Activated T-helper 1 cell treated with anti-CD3 and anti-CD28 coated beads, Interleukin-12 subunit alpha, Interleukin-12 subunit beta, Interleukin-2, Interleukin-4 antibody, amounts not matched to agents 30 ng/mL and 10 ng/mL and 1 ng/mL, durations not matched to agents 14 hours and 24 hours and 36 hours (primary cell): ENCODE measurements at regions of chr22 and their contacts with region 1.

Region 1: DNA sequence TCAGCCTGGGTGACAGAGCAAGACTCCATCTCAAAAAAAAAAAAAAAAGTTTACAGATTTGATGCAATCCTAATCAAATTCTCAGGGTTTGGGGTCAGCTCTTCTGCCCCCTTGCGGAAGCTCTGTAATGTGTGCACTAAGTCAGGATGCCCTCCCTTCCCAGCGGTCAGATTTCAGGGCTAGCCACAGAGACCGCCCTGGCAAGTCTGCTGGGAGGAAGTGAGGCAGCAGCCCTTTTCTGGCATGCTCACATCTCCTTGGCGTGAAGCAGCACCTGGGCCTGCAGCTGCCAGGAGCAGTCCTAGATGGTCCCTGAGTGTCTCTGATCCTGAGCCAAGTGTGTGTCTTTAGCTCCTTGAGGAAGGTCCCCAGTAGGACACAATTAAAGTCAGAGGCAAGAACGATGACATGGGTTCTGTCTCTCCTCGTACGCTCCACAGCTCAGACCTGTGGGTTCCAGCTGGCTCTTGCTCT is 10.9 kb upstream of the APOBEC3C start:
- DNase-seq: peak; percentile 68
- H3K4me3 Mint-ChIP-seq: no peak overlapping the region
- H3K27ac Mint-ChIP-seq: no peak overlapping the region
- H3K4me1 Mint-ChIP-seq: peaks cover 8% of the 10 kb centered on the region
- H3K27me3 Mint-ChIP-seq: peaks cover 18% of the 10 kb centered on the region

Region 2: GRCh38 chr22:38733329-38733723 is 269.9 kb before region 1 on chr22:
- intact Hi-C with region 1: no loop called
- DNase-seq: no peak
- H3K4me3 Mint-ChIP-seq: no peak overlapping the region
- H3K27ac Mint-ChIP-seq: peak overlapping the region; percentile 70
- H3K4me1 Mint-ChIP-seq: peaks cover 49% of the 10 kb centered on the region
- H3K27me3 Mint-ChIP-seq: no peaks in the 10 kb centered on the region

Region 3: GRCh38 chr22:38872172-38872830 is 130.9 kb before region 1 on chr22 and contains the start of gene CBX6:
- intact Hi-C with region 1: loop called (anchors 1 kb)
- DNase-seq: peak; percentile 94
- H3K4me3 Mint-ChIP-seq: peak within 1 kb of the TSS; percentile 89
- H3K27ac Mint-ChIP-seq: peak within 1 kb of the TSS; percentile 91
- H3K4me1 Mint-ChIP-seq: peaks cover 59% of the 10 kb centered on the region
- H3K27me3 Mint-ChIP-seq: peaks cover 2% of the 10 kb centered on the region
- total RNA-seq, gene CBX6: 171 and 178 TPM in 2 replicates

Region 4: DNA sequence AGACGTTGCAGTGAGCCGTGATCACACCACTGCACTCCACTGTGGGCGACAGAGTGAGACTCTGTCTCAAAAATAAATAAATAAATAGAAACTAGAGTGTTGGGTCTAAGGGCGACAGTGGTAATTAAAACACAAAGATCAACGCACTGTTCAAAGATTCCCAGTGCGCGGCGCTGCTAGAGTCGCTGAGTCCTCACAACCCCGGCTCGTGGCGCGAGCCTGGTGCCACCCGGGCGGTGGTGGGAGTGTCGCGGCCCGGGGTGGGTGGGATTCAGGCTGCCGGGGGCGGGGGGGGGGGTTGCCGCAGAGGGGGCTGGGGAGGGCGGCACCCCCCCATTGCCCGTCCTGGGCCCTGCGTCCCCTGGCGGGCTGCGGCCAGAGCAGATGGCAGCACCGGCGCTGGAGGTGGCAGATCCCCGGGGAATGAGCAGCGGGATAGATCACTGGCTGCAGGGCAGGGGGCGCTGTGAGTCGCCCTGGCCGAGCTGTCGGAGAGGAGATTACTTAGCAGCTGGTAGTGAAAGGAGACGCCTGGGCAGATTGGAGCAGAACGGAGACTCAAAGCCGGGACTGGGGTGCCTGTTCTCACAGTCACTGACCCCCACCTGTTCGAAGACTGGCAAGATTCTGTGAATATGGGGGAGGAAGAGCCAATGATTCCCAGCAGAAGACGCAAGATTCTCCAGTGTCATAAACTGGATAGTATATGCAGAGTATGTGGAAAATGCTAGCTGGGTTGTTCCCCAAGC is 76.0 kb before region 1 on chr22:
- intact Hi-C with region 1: loop called (anchors 1 kb)
- DNase-seq: peak; percentile 35
- H3K4me3 Mint-ChIP-seq: peak overlapping the region; percentile 46
- H3K27ac Mint-ChIP-seq: no peak overlapping the region
- H3K4me1 Mint-ChIP-seq: peaks cover 5% of the 10 kb centered on the region
- H3K27me3 Mint-ChIP-seq: peaks cover 31% of the 10 kb centered on the region

Region 5: GRCh38 chr22:38973289-38974169 is 29.7 kb before region 1 on chr22:
- intact Hi-C with region 1: loop called (anchors 1 kb)
- DNase-seq: peak; percentile 49
- H3K4me3 Mint-ChIP-seq: no peak overlapping the region
- H3K27ac Mint-ChIP-seq: no peak overlapping the region
- H3K4me1 Mint-ChIP-seq: peaks cover 18% of the 10 kb centered on the region
- H3K27me3 Mint-ChIP-seq: peaks cover 23% of the 10 kb centered on the region

Region 6: DNA sequence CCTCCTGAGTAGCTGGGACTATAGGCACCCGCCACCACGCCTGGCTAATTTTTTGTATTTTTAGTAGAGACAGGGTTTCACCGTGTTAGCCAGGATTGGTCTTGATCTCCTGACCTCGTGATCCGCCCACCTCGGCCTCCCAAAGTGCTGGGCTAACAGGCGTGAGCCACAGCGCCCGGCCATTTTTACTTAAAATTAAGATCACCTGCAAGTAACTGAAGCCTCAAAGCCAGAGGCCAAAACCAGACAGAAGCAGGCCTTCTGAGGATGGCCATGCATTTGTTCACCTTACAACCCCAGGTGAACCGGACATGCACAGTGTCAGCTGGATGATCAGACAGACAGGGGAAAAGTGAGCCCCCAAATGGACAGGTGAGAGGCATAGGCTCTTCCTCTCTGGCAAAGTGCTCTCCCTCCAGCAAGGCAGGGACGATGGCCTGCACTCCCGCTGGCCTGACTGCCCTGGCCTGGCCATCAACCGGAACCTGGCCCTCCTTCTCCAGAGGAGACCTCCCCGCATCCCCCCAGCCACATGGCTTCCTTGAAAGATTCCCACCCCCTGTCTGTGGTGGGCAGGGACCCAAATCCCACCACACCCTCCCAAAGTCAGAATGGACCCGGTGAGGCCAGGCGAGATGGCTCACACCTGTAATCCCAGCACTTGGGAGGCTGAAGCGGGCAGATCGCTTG is 119.7 kb after region 1 on chr22:
- intact Hi-C with region 1: loop called (anchors 1 kb)
- DNase-seq: no peak
- H3K4me3 Mint-ChIP-seq: no peak overlapping the region
- H3K27ac Mint-ChIP-seq: no peak overlapping the region
- H3K4me1 Mint-ChIP-seq: peaks cover 21% of the 10 kb centered on the region
- H3K27me3 Mint-ChIP-seq: no peaks in the 10 kb centered on the region

Region 7: GRCh38 chr22:39306581-39307361 is 303.6 kb after region 1 on chr22:
- intact Hi-C with region 1: loop called (anchors 5 kb)
- DNase-seq: peak; percentile 31
- H3K4me3 Mint-ChIP-seq: no peak overlapping the region
- H3K27ac Mint-ChIP-seq: no peak overlapping the region
- H3K4me1 Mint-ChIP-seq: peaks cover 13% of the 10 kb centered on the region
- H3K27me3 Mint-ChIP-seq: no peaks in the 10 kb centered on the region